ENCODE measurements at regions of chr15 and their contacts with region 1.

Region 1: GRCh38 chr15:27742751-27743477 is 356.2 kb downstream of the OCA2 start:
- DNase-seq: peak; percentile 7 to 18
- ATAC-seq: peak in 6 of 8 donors; percentile 21 to 65 (median 43)
- H3K4me3 ChIP-seq: no peak overlapping the region
- H3K27ac ChIP-seq: no peak overlapping the region
- H3K4me1 ChIP-seq: no peaks in the 10 kb centered on the region
- H3K27me3 ChIP-seq: peaks cover 0 to 6% (median 0%) of the 10 kb centered on the region in 7 donors
- CTCF ChIP-seq: no peak

Region 2: GRCh38 chr15:27707257-27707656 is 35.7 kb before region 1 on chr15:
- intact Hi-C with region 1: no loop called
- DNase-seq: no peak
- ATAC-seq: no peak
- H3K4me3 ChIP-seq: no peak overlapping the region
- H3K27ac ChIP-seq: no peak overlapping the region
- H3K4me1 ChIP-seq: no peaks in the 10 kb centered on the region
- H3K27me3 ChIP-seq: peaks cover 0 to 9% (median 0%) of the 10 kb centered on the region in 7 donors
- CTCF ChIP-seq: no peak

Region 3: DNA sequence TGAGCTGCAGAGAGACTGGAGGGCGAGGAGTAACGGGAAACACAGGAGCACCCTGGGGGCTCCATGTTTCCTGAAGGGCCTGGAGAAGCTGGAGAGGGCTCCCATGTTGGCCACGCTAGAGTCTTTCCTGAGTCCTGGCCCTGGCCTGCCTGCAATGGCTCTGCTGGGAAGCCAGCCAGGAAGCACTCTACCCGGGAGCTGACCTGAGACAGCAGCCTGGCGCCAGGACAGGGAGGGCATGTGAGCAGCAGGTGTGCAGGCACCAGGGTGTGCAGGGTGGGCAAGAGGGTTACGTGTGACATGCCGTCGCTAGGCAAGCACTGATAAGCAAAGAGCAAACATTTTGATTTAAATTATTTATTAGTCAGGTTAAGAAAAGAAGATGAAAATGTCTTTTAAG is 54.9 kb after region 1 on chr15:
- intact Hi-C with region 1: loop called in 1 of 10 experiments (anchors 10 kb)
- DNase-seq: peak; percentile 36 to 56
- ATAC-seq: peak in 7 of 8 donors; percentile 29 to 86 (median 55)
- H3K4me3 ChIP-seq: no peak overlapping the region
- H3K27ac ChIP-seq: no peak overlapping the region
- H3K4me1 ChIP-seq: no peaks in the 10 kb centered on the region
- H3K27me3 ChIP-seq: no peaks in the 10 kb centered on the region
- CTCF ChIP-seq: no peak

Region 4: GRCh38 chr15:27897481-27897880 is 154.6 kb after region 1 on chr15:
- intact Hi-C with region 1: no loop called
- DNase-seq: no peak
- ATAC-seq: no peak
- H3K4me3 ChIP-seq: no peak overlapping the region
- H3K27ac ChIP-seq: no peak overlapping the region
- H3K4me1 ChIP-seq: no peaks in the 10 kb centered on the region
- H3K27me3 ChIP-seq: peaks cover 0 to 4% (median 0%) of the 10 kb centered on the region in 7 donors
- CTCF ChIP-seq: no peak

Measured in heart right ventricle (tissue), 16 donors.